PC-9 (cell line): ENCODE measurements at regions of chr6 and their contacts with region 1.

Region 1: GRCh38 chr6:32868257-32868788 is 14.3 kb downstream of the PSMB9 start:
- DNase-seq: peak; percentile 55 to 67
- H3K4me3 ChIP-seq: no peak overlapping the region
- H3K27ac ChIP-seq: no peak overlapping the region
- H3K4me1 ChIP-seq: no peaks in the 10 kb centered on the region
- H3K27me3 ChIP-seq: no peaks in the 10 kb centered on the region
- CTCF ChIP-seq: peak; percentile 95

Region 2: GRCh38 chr6:32424589-32425300 is 443.6 kb before region 1 on chr6:
- CTCF ChIA-PET with region 1: interaction called, 15 read pairs
- POLR2A ChIA-PET with region 1: no interaction called
- intact Hi-C with region 1: no loop called
- DNase-seq: no peak
- H3K4me3 ChIP-seq: no peak overlapping the region
- H3K27ac ChIP-seq: no peak overlapping the region
- H3K4me1 ChIP-seq: no peaks in the 10 kb centered on the region
- H3K27me3 ChIP-seq: peaks cover 24% of the 10 kb centered on the region
- CTCF ChIP-seq: no peak

Region 3: DNA sequence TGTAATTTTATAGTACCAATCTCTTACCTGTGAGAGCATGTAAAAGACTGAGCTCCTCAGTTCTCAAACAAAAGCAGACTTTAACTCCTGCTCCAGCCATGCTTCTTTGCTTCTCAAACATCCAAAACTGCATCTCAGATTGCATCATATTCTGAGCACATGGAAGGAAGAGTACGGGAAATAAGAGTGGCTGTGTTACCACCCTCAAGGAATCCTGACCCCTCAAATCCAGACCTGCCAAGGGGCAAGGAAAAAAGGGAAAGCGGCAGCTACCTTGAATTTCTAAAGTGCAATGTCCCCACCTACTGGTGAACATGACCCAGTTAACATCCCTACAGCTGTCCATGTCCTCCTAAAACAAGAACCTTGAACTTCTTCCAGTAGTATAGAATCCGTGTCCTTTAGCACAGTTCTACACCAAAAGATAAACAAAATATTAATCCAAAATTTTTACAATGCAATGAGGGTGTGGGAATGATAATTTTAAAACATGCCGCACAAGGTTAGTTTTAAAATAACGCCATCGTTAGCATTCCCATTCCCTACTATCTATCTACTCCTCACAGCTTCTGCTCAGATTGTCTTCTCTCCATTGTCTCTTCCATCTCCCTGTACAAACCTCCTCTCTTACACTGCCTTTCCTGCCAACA is 167.8 kb before region 1 on chr6:
- CTCF ChIA-PET with region 1: interaction called, 3 read pairs
- POLR2A ChIA-PET with region 1: no interaction called
- intact Hi-C with region 1: loop called (anchors 5 kb)
- DNase-seq: peak; percentile 32 to 50
- H3K4me3 ChIP-seq: no peak overlapping the region
- H3K27ac ChIP-seq: no peak overlapping the region
- H3K4me1 ChIP-seq: no peaks in the 10 kb centered on the region
- H3K27me3 ChIP-seq: 0 out of 2 replicates have a peak, but pooled peaks cover 8% of the 10 kb centered on the region
- CTCF ChIP-seq: peak; percentile 70

Region 4: DNA sequence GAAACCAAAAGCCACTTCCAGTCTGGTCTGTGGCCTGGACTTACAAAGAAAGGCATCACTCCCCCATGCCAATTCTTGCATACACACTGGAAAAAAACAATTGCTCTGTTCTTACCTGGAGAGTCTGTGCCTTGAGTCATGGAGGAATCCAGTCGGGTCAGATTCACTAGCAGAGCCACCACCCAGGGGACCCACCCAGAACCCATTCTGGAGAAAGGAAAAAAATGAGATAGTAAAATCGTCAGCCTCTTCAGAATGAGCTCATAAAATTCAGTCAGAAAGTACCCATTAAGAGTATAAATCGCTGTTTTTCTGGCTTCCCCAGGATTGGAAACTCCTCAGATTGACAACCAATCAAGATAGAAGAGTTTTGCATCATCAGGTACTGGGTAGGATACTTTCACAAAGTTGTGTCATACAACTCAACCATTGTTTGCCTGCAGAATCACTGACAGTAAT is 51.5 kb before region 1 on chr6 and contains the start of gene HLA-DOB:
- CTCF ChIA-PET with region 1: no interaction called
- POLR2A ChIA-PET with region 1: no interaction called
- intact Hi-C with region 1: no loop called
- DNase-seq: peak; percentile 76 to 89
- H3K4me3 ChIP-seq: no peak within 1 kb of the TSS; the same call in 1 of the 2 replicates
- H3K27ac ChIP-seq: peak within 1 kb of the TSS; percentile 54
- H3K4me1 ChIP-seq: peaks cover 32% of the 10 kb centered on the region
- H3K27me3 ChIP-seq: no peaks in the 10 kb centered on the region
- CTCF ChIP-seq: no peak
- total RNA-seq, gene HLA-DOB: 3.4 and 4.3 TPM in 2 replicates

Region 5: DNA sequence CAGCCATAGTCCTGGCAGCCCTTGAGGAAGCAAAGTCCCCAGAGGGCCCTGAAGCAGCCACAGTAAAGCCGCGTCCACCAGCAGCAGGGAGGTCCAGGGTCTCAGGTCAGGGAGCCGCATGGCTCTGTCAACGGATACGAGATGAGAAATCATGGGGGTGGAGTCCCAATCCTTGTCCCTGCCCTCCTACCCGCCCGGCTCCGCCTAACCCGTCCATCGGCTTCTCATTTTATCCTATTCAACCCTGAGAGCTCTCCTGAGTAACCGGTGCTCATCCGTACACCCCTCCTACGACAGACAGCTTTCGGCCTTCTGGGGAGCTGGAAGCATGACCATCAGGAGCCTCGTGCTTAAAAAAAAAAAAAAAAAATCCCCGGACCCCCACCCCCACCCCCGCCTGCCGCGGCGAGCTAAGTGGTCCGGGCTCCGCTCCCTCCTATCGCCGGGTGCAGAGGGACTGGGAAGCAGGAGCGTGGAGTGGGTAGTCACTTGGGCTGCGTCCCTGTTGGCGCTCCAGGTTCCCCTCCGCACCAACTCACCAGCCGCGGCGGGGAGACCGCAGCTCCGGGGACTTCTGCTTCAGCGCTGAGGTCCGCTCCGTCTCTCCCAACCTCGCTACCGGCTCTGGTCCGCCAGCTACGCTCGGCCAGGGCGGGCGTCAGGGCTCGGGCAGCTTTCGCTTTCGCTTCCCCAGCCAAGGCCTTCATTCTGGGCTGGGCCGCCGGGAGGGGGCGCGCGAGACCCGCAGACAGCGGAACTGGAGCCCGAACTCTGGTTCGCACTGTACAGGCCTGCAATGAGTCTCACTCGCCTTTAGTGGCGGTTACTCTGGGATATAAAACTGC is 30.0 kb before region 1 on chr6 and contains the start of gene TAP2:
- CTCF ChIA-PET with region 1: interaction called, 49 read pairs
- POLR2A ChIA-PET with region 1: no interaction called
- intact Hi-C with region 1: loop called (anchors 1 kb)
- DNase-seq: peak; percentile 79 to 96
- H3K4me3 ChIP-seq: peak within 1 kb of the TSS; percentile 68
- H3K27ac ChIP-seq: peak within 1 kb of the TSS; percentile 21; the same call in 1 of the 2 replicates
- H3K4me1 ChIP-seq: peaks cover 13% of the 10 kb centered on the region
- H3K27me3 ChIP-seq: no peaks in the 10 kb centered on the region
- CTCF ChIP-seq: peak; percentile 93
- total RNA-seq, gene TAP2: 70.6 and 91.2 TPM in 2 replicates

Region 6: DNA sequence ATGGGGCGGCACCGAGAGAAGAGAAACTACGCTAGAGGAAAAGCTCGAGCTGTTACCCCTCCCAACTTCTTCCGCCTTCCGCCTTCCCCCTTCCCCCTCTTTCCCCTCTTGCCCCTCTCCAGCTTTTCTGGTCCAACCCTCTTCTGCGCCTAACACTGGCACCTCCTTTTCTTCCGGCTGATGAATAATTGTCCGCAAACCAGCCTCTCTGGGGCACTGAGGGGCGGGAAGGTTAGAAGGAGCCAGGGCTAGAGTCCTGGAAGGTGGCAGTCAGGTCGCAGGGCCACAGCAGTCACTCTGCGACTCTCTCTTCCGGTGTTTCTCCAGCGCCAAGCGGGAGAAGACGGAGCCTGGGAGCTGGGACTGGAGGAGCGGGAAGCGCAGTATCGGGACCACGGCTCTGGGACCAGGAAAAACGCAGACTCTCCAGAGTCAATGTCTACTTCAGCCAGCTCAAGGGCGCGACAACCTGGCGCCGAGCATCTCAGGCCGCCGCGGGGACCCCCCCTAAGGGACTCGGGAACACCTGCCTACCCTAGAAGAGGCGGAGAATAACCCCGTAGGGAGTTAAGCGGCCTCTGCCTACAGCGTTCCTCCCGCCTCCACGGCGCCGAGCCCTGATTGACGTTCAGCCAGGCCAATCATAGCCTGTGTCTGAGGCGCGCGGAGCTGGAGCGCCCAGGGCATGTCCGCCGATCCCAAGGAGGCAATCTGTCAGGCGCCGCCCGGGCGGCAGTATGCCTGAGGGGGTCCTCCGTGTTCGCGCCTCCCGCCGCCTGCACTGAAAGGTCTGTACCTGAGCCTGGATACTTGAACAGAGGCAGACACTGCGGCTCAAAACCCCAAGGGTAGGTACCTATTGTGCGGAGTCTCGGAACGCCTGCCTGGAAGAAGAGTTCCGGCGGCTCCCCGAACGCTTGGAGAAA is 26.0 kb after region 1 on chr6:
- CTCF ChIA-PET with region 1: no interaction called
- POLR2A ChIA-PET with region 1: no interaction called
- intact Hi-C with region 1: loop called (anchors 1 kb)
- DNase-seq: peak; percentile 83 to 97
- H3K4me3 ChIP-seq: peak overlapping the region; percentile 86
- H3K27ac ChIP-seq: peak overlapping the region; percentile 63
- H3K4me1 ChIP-seq: peaks cover 12% of the 10 kb centered on the region
- H3K27me3 ChIP-seq: no peaks in the 10 kb centered on the region
- CTCF ChIP-seq: no peak

Region 7: GRCh38 chr6:33000055-33000454 is 131.7 kb after region 1 on chr6:
- CTCF ChIA-PET with region 1: no interaction called
- POLR2A ChIA-PET with region 1: no interaction called
- intact Hi-C with region 1: no loop called
- DNase-seq: no peak
- H3K4me3 ChIP-seq: no peak overlapping the region
- H3K27ac ChIP-seq: no peak overlapping the region
- H3K4me1 ChIP-seq: no peaks in the 10 kb centered on the region
- H3K27me3 ChIP-seq: peaks cover 74% of the 10 kb centered on the region
- CTCF ChIP-seq: peak; percentile 39; the same call in 1 of the 2 replicates